ENCODE measurements at regions of chr17 and their contacts with region 1.

Region 1: GRCh38 chr17:75012346-75013091 is at the start of gene MRPL58:
- DNase-seq: peak; percentile 86
- H3K4me3 Mint-ChIP-seq: peak within 1 kb of the TSS; percentile 91
- H3K27ac Mint-ChIP-seq: peak within 1 kb of the TSS; percentile 81
- H3K4me1 Mint-ChIP-seq: peaks cover 35% of the 10 kb centered on the region
- H3K27me3 Mint-ChIP-seq: no peaks in the 10 kb centered on the region
- total RNA-seq, gene MRPL58: 60.6 to 64.5 TPM

Region 2: GRCh38 chr17:74987418-74987908 is 25.1 kb before region 1 on chr17 and contains the start of gene CDR2L:
- CTCF ChIA-PET with region 1: interaction called, 15 read pairs
- intact Hi-C with region 1: no loop called
- DNase-seq: peak; percentile 94
- H3K4me3 Mint-ChIP-seq: peak within 1 kb of the TSS; percentile 80
- H3K27ac Mint-ChIP-seq: no peak within 1 kb of the TSS
- H3K4me1 Mint-ChIP-seq: peaks cover 8% of the 10 kb centered on the region
- H3K27me3 Mint-ChIP-seq: peaks cover 9% of the 10 kb centered on the region
- total RNA-seq, gene CDR2L: 0.49 to 0.93 TPM

Region 3: DNA sequence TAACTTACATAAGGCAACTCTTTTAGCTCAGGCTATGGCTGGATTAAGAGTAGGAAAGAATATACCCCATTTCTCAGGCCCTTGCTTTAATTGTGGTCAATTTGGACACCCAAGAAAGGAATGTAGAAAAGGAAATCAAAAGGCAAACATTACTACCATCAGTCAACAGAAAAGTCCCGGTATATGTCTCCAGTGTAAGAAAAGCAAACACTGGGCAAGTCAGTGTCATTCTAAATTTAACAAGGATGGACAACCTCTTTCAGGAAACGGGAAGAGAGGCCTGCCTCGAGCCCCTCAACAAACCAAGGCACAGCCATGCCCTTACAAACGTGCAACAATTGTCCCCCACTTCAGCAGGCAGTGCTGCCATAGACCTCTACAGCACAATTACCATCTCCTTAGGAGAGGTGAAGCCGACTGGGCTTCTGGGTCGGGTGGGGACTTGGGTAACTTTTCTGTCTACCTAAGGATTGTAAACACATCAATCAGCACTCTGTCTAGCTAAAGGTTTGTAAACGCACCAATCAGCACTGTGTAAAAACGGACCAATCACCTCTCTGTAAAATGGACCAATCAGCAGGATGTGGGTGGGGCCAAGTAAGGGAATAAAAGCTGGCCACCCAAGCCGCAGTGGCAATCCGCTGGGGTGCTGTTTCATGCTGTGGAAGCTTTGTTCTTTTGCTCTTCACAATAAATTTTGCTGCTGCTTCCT is 12.3 kb after region 1 on chr17:
- CTCF ChIA-PET with region 1: interaction called, 21 read pairs
- intact Hi-C with region 1: no loop called
- DNase-seq: peak; percentile 57
- H3K4me3 Mint-ChIP-seq: peak overlapping the region; percentile 44
- H3K27ac Mint-ChIP-seq: no peak overlapping the region
- H3K4me1 Mint-ChIP-seq: peaks cover 14% of the 10 kb centered on the region
- H3K27me3 Mint-ChIP-seq: no peaks in the 10 kb centered on the region

Region 4: DNA sequence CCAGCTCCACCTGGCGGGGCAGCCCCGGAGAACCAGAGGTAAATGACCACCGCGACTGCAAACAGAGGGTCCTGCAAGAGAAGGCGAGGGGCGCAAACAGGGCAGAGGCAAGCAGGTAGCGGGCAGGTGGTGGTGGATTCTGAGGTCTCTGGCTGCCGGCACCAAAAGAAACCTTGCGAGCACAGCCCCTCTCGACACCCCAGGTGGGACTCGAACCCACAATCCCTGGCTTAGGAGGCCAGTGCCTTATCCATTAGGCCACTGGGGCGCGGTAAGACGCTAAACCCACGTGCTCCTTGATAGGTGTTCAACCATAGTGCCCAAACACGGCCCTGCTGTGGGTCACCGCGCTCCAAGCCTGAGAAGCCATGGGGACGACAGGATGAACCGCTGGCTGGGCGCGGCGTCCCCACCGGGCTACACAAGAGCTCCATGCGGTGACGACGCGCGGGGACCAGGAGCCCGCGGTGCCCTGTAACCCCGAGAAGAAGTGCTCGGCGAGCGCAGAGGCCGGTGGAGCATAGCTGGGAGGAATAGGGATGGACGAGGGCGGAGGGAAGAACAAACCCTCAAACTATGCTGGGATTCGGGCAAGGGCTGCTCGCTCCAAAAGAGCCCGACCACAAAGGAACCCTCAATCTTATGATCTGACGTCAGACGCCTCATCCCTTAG is 21.9 kb after region 1 on chr17:
- CTCF ChIA-PET with region 1: interaction called, 6 read pairs
- intact Hi-C with region 1: loop called (anchors 1 kb)
- DNase-seq: peak; percentile 96
- H3K4me3 Mint-ChIP-seq: peak overlapping the region; percentile 95
- H3K27ac Mint-ChIP-seq: peak overlapping the region; percentile 93
- H3K4me1 Mint-ChIP-seq: peaks cover 46% of the 10 kb centered on the region
- H3K27me3 Mint-ChIP-seq: peaks cover 3% of the 10 kb centered on the region

Region 5: GRCh38 chr17:75645889-75646637 is 633.5 kb after region 1 on chr17:
- CTCF ChIA-PET with region 1: no interaction called
- intact Hi-C with region 1: no loop called
- DNase-seq: no peak
- H3K4me3 Mint-ChIP-seq: no peak overlapping the region
- H3K27ac Mint-ChIP-seq: no peak overlapping the region
- H3K4me1 Mint-ChIP-seq: peaks cover 4% of the 10 kb centered on the region
- H3K27me3 Mint-ChIP-seq: no peaks in the 10 kb centered on the region